ENCODE measurements at regions of chr7 and their contacts with region 1.

Region 1: DNA sequence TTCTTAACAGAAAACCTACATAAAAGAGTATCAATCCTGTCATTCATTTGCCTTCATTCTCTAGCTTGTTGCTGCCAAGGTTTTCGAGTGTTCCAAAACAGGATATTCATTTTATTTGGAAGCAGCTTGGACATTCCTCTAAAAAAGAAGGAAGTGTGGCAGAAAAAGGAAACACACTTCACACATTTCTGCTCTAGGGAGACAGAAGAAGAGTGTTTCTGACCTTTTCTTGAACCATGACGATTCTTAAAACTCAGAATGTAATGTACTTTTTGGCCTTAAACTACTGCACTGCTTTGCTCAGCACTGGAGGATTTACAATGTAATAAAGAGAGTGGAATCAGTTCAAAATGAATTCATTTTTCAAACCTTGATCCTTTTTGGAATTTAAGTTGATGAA is 81.3 kb downstream of the SEMA3A start:
- DNase-seq: no peak

Region 2: GRCh38 chr7:84022686-84023308 is 90.5 kb before region 1 on chr7:
- intact Hi-C with region 1: loop called (anchors 5 kb)
- DNase-seq: no peak

Region 3: DNA sequence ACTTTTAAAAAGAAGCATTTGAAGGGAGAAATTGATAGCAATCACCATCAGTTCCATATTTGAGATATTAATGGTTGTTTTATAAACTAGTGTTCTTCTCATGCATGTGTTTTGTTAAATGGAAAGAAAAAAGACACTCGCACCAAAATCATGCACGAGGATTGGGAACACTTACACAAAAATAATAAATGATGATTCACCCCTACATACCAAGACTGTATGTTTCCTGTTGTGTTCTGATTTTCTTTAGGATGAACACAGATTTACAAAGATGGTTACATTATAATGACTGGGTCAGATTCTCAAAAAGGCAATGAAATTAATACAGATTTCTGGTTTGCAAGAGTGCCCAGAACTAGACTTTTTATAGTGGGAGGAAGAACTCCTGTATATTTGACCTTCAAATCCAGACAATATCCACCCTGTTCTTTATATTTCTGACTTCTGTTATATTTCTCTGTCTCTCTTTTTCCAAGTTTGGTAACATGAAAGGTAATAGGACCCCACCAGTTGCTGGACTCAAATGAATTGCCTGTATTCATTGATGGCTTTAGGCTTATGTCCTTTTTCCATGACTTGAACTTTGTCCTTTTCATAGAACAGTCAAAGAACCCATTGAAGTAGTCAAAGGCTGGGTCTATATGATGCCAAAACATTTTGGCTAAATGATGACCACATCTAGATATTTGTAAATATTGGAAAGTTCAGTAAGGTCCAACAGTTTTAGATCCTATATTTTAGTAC is 26.9 kb after region 1 on chr7:
- intact Hi-C with region 1: no loop called
- DNase-seq: no peak